ENCODE measurements at regions of chr11 and their contacts with region 1.

Region 1: DNA sequence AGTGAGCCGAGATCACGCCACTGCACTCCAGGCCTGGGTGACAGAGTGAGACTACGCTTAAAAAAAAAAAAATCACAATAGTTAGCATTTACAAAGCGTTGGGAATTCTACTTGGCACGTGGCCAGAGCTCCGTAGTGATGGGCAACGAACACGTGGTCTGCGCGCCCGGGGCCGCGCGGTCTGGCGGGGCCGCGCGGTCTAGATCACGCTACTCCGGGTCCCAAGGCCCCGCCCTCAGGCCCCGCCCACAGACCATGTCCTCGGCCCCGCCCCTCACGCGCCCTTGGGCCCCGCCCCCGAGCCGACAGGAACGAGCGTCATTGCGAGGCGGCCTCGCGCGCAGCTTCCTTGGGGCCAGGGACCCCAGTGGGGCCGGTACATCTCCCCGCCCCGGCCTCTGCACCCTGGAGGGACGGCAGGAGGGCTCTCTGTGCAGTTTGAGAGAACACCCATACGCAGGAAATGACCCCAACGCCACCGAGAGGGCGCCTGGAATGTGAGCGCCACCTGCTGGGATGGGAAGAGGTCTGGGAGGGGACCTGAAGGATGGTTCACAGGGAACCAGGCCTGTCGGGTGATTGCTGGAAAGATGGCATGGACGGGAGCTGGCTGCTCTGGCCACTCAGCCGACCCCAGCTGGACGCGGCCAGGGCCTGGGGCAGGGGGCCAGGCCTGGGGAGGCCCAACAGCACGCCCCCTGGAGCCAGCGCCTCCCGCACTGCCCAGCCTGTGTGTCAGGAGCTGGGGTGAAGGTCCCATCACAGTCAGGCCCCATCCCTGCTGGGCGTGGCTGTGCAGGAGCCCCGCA is 2.0 kb upstream of the PTDSS2 start:
- DNase-seq: peak; percentile 97
- H3K4me3 Mint-ChIP-seq: peak overlapping the region; percentile 93
- H3K27ac Mint-ChIP-seq: peak overlapping the region; percentile 95
- H3K4me1 Mint-ChIP-seq: peaks cover 24% of the 10 kb centered on the region
- H3K27me3 Mint-ChIP-seq: no peaks in the 10 kb centered on the region

Region 2: GRCh38 chr11:207208-207862 is 240.8 kb before region 1 on chr11 and contains the starts of genes BET1L and RIC8A:
- CTCF ChIA-PET with region 1: interaction called, 3 read pairs
- intact Hi-C with region 1: loop called (anchors 1 kb)
- DNase-seq: peak; percentile 98
- H3K4me3 Mint-ChIP-seq: peak within 1 kb of the TSS; percentile 96
- H3K27ac Mint-ChIP-seq: peak within 1 kb of the TSS; percentile 98
- H3K4me1 Mint-ChIP-seq: peaks cover 69% of the 10 kb centered on the region
- H3K27me3 Mint-ChIP-seq: no peaks in the 10 kb centered on the region
- total RNA-seq, gene BET1L: 50.4 to 51.6 TPM
- total RNA-seq, gene RIC8A: 74.9 to 85.0 TPM

Region 3: DNA sequence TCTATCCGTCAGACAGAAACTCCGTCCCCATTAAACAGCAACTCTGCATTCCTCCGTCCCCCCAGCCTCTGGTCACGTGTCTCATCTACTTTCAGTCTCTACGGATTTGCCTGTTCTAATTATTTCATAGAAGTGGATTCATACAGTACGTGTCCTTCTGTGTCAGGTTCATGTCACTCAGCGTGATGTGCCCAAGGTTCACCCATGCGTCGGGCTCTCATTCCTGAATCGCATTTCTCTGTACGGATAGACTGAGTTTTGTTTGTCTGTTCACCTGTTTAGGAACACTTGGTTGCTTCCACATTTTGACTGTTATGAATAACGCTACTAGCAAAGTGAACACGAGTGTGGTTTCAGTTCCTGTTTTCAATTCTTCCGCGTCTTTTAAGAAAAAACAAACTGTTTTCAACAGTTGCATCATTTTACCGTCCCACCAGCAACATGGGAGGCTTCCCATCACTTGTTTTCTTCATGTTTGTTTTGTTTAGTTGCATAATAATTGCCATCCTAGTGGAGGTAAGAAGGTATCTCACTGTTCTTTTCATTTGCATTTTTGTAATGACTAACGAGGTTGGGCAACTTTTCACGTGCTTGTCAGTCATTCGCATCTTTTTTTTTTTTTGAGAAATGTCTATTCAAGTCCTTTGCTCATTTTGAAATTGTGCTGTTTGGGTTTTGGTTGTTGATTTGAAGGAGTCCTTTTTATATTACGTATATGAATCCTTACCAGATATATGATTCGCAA is 178.8 kb before region 1 on chr11:
- CTCF ChIA-PET with region 1: interaction called, 6 read pairs
- intact Hi-C with region 1: loop called (anchors 1 kb)
- DNase-seq: peak; percentile 80
- H3K4me3 Mint-ChIP-seq: peak overlapping the region; percentile 89
- H3K27ac Mint-ChIP-seq: peak overlapping the region; percentile 99
- H3K4me1 Mint-ChIP-seq: peaks cover 36% of the 10 kb centered on the region
- H3K27me3 Mint-ChIP-seq: no peaks in the 10 kb centered on the region

Region 4: GRCh38 chr11:355581-356458 is 92.3 kb before region 1 on chr11:
- CTCF ChIA-PET with region 1: interaction called, 3 read pairs
- intact Hi-C with region 1: loop called (anchors 5 kb)
- DNase-seq: peak; percentile 93
- H3K4me3 Mint-ChIP-seq: peak overlapping the region; percentile 94
- H3K27ac Mint-ChIP-seq: peak overlapping the region; percentile 99
- H3K4me1 Mint-ChIP-seq: peaks cover 36% of the 10 kb centered on the region
- H3K27me3 Mint-ChIP-seq: no peaks in the 10 kb centered on the region

Region 5: DNA sequence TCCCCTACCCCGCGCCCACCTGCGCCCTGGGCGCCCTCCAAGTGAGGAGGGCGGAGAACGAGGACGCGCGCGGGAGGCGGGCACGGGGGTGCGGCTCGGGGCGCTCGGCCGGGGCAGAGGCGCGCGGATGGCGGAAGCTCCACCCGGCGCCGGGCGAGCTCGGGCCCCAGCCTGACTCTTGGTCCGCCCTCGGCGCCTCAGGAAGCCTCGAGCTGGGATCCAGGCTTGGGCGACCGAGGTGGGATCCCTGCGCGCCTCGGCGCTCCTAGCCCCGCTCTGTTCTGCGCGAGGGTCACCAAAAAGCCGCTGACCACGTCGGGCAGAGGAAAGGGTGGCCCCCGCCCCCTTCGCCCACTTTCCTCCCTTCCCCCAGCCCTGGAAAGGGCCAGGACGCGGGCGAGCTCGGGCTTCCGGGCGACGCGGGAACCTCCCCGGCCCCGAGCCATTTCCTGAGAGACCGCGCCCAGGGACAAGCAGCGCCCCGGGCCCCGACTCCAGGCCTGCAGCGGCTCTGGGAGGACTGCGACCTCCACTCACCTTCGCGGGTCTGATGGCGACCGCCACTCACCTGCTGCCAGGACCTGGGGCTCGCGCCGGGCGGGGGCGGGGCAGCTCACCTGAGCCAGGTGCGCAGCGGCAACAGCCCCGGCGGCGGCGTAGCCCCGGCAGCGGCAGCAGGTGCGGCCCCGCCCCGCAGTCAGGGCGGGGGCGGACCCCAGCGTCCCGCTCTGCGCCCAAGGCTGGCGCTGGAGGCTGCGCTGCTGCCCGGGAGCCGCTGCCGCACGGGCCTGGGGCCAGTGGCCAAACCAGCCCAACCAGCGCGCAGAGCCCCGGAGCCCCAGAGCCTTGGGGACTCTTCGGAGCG is 31.1 kb before region 1 on chr11:
- CTCF ChIA-PET with region 1: interaction called, 10 read pairs
- intact Hi-C with region 1: loop called (anchors 1 kb)
- DNase-seq: peak; percentile 49
- H3K4me3 Mint-ChIP-seq: peak overlapping the region; percentile 86
- H3K27ac Mint-ChIP-seq: no peak overlapping the region
- H3K4me1 Mint-ChIP-seq: peaks cover 30% of the 10 kb centered on the region
- H3K27me3 Mint-ChIP-seq: no peaks in the 10 kb centered on the region

Region 6: DNA sequence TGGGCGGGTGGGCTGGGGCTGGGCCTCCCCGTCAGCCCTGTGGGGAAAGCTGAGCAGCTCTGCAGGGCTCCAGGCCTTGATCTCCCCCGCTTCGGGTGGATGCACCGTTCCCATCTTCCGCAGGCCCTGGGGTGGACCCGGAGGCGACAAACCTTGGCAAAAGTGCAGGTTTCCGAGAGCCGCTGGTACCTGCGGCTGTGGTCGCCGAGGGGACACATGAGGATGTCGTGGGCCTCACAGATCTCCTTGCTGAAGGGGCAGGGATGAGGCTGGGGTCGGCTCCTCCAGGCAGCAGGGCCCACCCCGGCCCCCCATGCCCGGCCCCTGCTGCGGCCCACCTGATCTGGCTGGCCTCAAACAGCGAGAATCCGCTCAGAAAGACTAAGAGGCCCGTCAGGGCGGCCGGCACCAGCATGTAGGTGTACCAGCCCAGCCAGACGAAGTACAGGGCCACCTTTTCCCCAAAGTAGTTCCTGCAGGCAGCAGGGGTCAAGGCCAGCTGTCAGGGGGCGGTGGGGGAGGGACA is 18.1 kb before region 1 on chr11:
- CTCF ChIA-PET with region 1: no interaction called
- intact Hi-C with region 1: no loop called
- DNase-seq: no peak
- H3K4me3 Mint-ChIP-seq: no peak overlapping the region
- H3K27ac Mint-ChIP-seq: no peak overlapping the region
- H3K4me1 Mint-ChIP-seq: no peaks in the 10 kb centered on the region
- H3K27me3 Mint-ChIP-seq: no peaks in the 10 kb centered on the region

Region 7: DNA sequence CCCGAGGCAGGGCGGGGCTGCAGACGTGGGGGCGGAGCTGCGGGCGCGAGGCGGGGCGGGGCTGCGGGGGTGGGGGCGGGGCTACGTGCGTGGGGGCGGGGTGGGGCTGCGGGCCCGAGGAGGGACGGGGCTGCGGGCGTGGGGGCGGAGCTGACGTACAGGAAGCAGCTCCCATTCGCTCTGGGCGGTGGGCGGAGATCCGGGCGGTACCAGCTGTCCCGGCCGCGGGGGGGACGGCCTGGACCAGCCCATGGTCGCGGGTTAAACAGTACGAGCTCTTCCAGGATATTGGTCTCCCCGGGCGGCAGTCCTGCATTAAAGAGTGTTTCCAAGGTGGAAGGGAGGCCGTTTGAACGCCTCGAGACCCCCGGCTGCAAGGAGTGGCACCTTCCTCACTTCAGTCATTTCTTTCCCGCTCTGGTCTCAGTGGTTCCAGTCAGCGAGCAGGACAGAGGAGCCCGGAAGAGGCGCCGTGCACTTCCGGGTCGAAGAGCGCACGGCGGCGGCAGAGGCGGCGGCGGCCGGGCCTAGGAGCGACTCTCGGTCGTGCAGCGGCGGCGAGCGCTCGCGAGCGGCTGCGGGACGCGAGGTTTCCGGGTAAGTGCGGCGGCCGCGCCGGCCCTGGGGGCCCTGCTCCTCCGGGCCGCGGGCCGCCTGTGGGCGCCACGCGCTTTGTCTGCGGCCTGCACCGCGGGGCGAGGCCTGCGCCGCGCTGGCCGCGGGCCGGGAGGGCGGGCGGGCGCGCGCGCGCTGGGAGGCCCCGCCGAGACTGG is 128.1 kb after region 1 on chr11 and contains the start of gene PHRF1:
- CTCF ChIA-PET with region 1: no interaction called
- intact Hi-C with region 1: loop called (anchors 2 kb)
- DNase-seq: peak; percentile 96
- H3K4me3 Mint-ChIP-seq: peak within 1 kb of the TSS; percentile 88
- H3K27ac Mint-ChIP-seq: peak within 1 kb of the TSS; percentile 99
- H3K4me1 Mint-ChIP-seq: peaks cover 48% of the 10 kb centered on the region
- H3K27me3 Mint-ChIP-seq: peaks cover 6% of the 10 kb centered on the region
- total RNA-seq, gene PHRF1: 25.6 to 26.1 TPM

Region 8: GRCh38 chr11:809287-810039 is 361.3 kb after region 1 on chr11 and contains the start of gene RPLP2:
- CTCF ChIA-PET with region 1: no interaction called
- intact Hi-C with region 1: loop called (anchors 5 kb)
- DNase-seq: peak; percentile 99
- H3K4me3 Mint-ChIP-seq: peak within 1 kb of the TSS; percentile 84
- H3K27ac Mint-ChIP-seq: peak within 1 kb of the TSS; percentile 97
- H3K4me1 Mint-ChIP-seq: peaks cover 33% of the 10 kb centered on the region
- H3K27me3 Mint-ChIP-seq: no peaks in the 10 kb centered on the region
- total RNA-seq, gene RPLP2: 3,807 to 3,940 TPM

Measured in activated naive CD4-positive, alpha-beta T cell treated with anti-CD3 and anti-CD28 coated beads for 36 hours (primary cell).